ENCODE measurements at regions of chr11 and their contacts with region 1.

Region 1: DNA sequence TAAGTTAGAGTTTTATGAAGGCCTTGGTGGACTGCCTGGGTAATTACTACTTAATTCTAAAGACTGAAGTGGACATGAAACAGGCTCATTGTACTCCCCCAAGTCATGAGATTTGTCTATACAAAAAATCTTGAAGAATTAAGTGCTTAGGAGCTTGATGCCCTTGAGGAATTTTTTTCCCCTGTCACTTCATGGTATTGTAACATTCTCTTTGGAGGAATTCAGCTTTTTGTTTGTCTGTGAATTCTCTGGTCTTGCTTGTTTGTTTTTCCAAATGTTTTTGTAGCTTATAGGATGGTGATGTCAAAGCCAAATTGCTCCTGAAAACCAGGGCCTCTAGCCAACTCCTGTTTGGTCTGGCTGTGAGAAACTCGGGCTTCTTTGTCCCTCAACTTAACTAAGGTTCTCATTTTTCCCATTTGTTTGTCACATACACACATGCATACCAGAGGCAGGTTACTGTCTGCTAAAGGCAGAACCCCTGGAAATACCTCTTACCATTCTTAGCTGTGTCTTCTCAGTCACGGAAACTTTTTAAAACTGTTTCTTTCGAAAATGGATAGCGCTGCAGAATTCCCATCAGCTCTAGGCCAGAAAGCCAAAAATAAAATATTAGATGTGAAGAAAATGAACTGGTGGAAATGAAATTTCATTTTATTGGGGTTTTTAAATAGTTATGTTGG is 66.9 kb downstream of the AMOTL1 start:
- DNase-seq: no peak
- H3K4me3 ChIP-seq: no peak overlapping the region
- H3K27ac ChIP-seq: peak overlapping the region; percentile 58
- H3K27me3 ChIP-seq: no peaks in the 10 kb centered on the region
- CTCF ChIP-seq: no peak

Region 2: GRCh38 chr11:94664346-94664745 is 170.7 kb before region 1 on chr11:
- CTCF ChIA-PET with region 1: no interaction called
- POLR2A ChIA-PET with region 1: no interaction called
- DNase-seq: no peak
- H3K4me3 ChIP-seq: no peak overlapping the region
- H3K27ac ChIP-seq: no peak overlapping the region
- H3K27me3 ChIP-seq: peaks cover 24% of the 10 kb centered on the region
- CTCF ChIP-seq: no peak

Region 3: GRCh38 chr11:94753630-94754029 is 81.4 kb before region 1 on chr11:
- CTCF ChIA-PET with region 1: interaction called, 5 read pairs
- POLR2A ChIA-PET with region 1: interaction called, 14 read pairs
- DNase-seq: no peak
- H3K4me3 ChIP-seq: no peak overlapping the region
- H3K27ac ChIP-seq: no peak overlapping the region
- H3K27me3 ChIP-seq: no peaks in the 10 kb centered on the region
- CTCF ChIP-seq: no peak

Region 4: GRCh38 chr11:95187723-95188122 is 352.7 kb after region 1 on chr11:
- CTCF ChIA-PET with region 1: no interaction called
- POLR2A ChIA-PET with region 1: no interaction called
- DNase-seq: no peak
- H3K4me3 ChIP-seq: no peak overlapping the region
- H3K27ac ChIP-seq: no peak overlapping the region
- H3K27me3 ChIP-seq: no peaks in the 10 kb centered on the region
- CTCF ChIP-seq: no peak

Measured in AG04450 (cell line).